Heart right ventricle (tissue), 16 donors: ENCODE measurements at regions of chr17 and their contacts with region 1.

Region 1: GRCh38 chr17:49315551-49316257 is 46.3 kb downstream of the ZNF652 start:
- DNase-seq: peak; percentile 43 to 71
- ATAC-seq: peak; percentile 93 to 99 (median 97)
- H3K4me3 ChIP-seq: no peak overlapping the region
- H3K27ac ChIP-seq: peak overlapping the region in 1 of 10 donors; percentile 59
- H3K4me1 ChIP-seq: peaks cover 0 to 28% (median 6%) of the 10 kb centered on the region in 9 donors
- H3K27me3 ChIP-seq: no peaks in the 10 kb centered on the region
- CTCF ChIP-seq: peak; percentile 57 to 93 (median 84)

Region 2: DNA sequence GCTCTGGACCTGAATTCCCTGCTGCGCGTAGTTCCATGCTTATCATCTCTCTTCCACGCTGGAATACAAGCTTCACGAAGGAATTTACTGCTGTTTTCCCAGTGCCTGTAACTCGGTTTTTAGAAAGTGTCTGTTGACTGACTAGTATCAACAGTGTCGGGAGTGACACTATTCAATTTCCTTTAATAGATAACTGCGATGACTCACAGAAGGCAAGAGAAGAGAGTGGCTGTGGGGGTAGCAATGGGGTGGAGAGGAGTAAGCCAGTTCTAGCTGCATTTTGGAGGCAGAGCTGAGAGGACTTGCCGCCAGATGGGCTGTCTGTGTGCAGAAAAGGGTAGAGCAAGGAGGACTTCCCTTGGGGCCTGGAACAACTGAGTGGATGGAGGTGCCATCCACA is 157.9 kb before region 1 on chr17:
- intact Hi-C with region 1: no loop called
- DNase-seq: no peak
- ATAC-seq: no peak
- H3K4me3 ChIP-seq: no peak overlapping the region
- H3K27ac ChIP-seq: no peak overlapping the region
- H3K4me1 ChIP-seq: no peaks in the 10 kb centered on the region
- H3K27me3 ChIP-seq: peaks cover 0 to 87% (median 70%) of the 10 kb centered on the region in 7 donors
- CTCF ChIP-seq: no peak

Region 3: DNA sequence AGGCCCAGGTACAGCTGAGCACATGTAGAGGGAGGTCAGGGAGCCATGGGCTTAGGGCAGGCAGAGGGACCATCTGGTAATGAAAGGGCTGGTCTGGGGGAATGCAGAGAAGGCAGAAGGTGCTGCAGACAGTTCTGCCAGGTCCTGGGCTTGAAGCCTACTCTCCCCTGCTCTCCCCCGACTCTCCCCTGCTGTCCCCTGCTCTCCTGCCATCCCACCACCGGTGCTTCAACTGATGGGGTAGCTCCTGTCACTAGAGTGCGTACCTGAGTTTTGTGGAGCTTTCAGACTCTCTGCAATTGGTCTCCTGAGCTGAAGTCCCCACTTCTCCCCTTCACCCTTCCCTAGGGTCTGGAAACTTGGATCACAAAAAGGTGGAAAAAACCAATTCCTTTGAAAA is 47.8 kb before region 1 on chr17:
- intact Hi-C with region 1: loop called in 1 of 10 experiments (anchors 1 kb)
- DNase-seq: no peak
- ATAC-seq: no peak
- H3K4me3 ChIP-seq: no peak overlapping the region
- H3K27ac ChIP-seq: no peak overlapping the region
- H3K4me1 ChIP-seq: no peaks in the 10 kb centered on the region
- H3K27me3 ChIP-seq: no peaks in the 10 kb centered on the region
- CTCF ChIP-seq: no peak

Region 4: GRCh38 chr17:49361902-49362722 is 46.4 kb after region 1 on chr17 and contains the start of gene ZNF652:
- intact Hi-C with region 1: loop called in 5 of 10 experiments (anchors 5 to 10 kb)
- DNase-seq: peak; percentile 91
- ATAC-seq: peak; percentile 86 to 95 (median 92)
- H3K4me3 ChIP-seq: peak within 1 kb of the TSS; percentile 82 to 100 (median 94)
- H3K27ac ChIP-seq: peak within 1 kb of the TSS; percentile 55 to 95 (median 92)
- H3K4me1 ChIP-seq: peaks cover 0 to 46% (median 36%) of the 10 kb centered on the region in 9 donors
- H3K27me3 ChIP-seq: no peaks in the 10 kb centered on the region
- CTCF ChIP-seq: no peak
- total RNA-seq, gene ZNF652: 16.0 to 23.8 (median 19.6) TPM

Region 5: DNA sequence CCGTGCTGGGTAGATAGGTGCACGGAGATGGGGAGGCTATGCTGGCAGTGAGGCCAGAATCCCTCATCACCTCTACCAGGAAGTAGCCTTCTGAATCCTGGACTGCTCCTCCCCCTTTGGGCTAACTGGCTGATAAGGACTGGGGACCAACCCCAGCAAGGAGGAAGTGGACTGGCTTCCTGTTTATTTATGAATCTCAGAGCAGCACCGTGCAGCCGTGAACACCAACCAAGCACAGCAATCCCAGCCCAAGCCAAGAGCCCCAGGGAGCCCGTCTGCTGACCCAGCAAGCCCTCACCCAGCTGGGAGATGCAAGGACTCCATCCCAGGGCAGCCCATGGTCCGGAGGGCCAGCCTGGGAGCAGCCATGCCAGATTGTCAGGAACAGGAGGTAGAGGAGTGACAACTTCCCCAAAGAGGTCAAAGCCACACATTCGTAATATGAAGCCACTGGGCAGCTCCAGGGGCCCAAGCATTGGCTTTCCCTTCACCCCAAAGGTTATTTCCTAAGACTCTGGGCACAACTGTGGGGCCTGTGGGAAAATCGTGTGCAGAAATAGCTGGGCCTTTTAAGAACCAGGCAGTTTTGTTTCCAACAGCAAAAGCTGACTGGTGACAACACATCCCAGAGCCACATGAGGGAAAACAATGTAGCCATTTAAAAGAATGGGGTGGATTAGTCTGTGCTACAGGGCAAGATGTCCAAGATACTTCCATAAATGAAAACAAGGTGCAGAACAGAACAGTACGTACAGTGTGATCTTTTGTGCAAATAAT is 75.0 kb after region 1 on chr17:
- intact Hi-C with region 1: loop called (anchors 1 to 5 kb)
- DNase-seq: no peak
- ATAC-seq: peak; percentile 39 to 76 (median 57)
- H3K4me3 ChIP-seq: peak overlapping the region in 2 of 10 donors; percentile 2 to 38
- H3K27ac ChIP-seq: peak overlapping the region in 5 of 10 donors; percentile 12 to 90 (median 58)
- H3K4me1 ChIP-seq: peaks cover 0 to 75% (median 8%) of the 10 kb centered on the region in 9 donors
- H3K27me3 ChIP-seq: no peaks in the 10 kb centered on the region
- CTCF ChIP-seq: no peak

Region 6: DNA sequence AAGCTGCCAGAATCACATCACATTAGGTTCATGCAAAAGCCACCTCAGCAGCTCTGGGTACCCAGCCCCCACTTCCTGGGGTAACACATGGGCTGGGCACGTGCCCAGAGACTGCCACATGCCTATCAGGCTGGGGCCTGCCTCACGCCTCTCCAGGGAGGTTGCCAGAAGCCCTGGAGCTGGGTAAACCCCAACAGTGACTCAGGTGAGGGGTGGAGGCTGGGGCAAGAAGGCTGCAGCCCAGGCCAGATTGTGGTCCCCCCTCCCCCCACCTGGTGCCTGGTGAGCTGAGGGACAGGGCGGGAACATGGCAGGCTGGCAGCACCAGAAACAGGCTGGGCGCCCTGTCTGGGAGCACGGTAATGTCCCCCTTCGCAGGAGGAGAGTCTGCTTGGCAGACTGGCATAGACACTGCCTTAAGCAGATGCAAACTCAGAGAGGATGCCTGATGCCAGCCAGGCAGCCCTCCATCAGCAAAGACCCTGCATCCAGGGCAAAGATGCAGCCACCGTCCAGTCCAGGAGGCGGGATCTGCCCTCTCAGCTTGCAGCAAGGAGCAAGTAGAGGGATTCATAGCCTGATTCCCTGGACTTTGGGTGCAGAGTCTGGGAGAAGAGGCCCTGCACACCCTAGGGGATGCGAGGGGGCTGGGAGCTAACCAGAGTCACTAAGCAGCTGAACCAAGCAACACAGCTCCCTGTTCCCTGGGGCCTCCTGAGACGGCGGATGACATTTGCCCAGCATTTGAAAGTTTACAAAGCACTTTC is 208.2 kb after region 1 on chr17:
- intact Hi-C with region 1: no loop called
- DNase-seq: no peak
- ATAC-seq: no peak
- H3K4me3 ChIP-seq: no peak overlapping the region
- H3K27ac ChIP-seq: no peak overlapping the region
- H3K4me1 ChIP-seq: peaks cover 0 to 31% (median 0%) of the 10 kb centered on the region in 9 donors
- H3K27me3 ChIP-seq: peaks cover 0 to 77% (median 1%) of the 10 kb centered on the region in 7 donors
- CTCF ChIP-seq: no peak

Region 7: DNA sequence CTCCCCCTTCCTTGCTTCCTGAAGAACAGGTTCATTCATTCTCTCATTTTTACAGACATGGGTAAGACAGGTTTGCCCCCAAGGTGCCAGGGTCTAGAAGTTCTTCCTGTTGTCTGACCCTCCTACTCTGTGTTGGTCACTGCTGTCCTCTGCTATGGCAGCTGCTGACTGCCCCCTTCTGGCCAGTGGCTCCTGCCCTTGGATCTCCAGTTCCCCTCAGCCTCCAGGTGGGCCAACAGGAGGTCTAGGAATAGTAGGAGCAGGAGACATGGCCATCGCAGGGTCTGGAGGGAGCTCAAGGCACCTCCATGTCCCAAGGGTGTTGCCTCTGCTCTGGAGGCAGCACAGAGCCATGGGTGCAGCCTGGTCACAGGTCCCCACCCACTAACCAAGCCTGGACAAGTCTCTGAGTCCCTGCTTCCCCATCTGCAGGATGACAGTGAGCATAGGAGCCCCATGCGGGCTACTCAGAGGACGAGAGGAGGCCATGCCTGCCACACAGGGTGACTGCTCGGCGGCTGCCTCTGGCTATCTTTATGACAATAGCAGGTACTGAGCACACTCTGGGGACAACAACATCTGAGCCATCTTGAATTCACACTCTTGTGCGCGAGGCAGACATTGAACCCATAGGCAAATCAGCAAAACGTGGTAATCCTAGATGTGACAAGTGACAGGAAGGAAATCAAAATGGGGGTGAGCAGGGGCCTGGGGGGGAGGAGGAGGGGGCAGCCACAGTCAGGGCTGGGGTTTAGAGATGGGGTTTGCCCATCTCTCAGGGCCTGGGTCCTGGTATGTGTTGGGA is 233.0 kb after region 1 on chr17:
- intact Hi-C with region 1: loop called in 6 of 10 experiments (anchors 5 to 10 kb)
- DNase-seq: peak in 1 of 2 donors; percentile 64
- ATAC-seq: peak; percentile 43 to 78 (median 70)
- H3K4me3 ChIP-seq: no peak overlapping the region
- H3K27ac ChIP-seq: peak overlapping the region in 2 of 10 donors; percentile 40 to 65
- H3K4me1 ChIP-seq: peaks cover 0 to 23% (median 0%) of the 10 kb centered on the region in 9 donors
- H3K27me3 ChIP-seq: peaks cover 0 to 18% (median 0%) of the 10 kb centered on the region in 7 donors
- CTCF ChIP-seq: peak; percentile 20 to 73 (median 63)

Region 8: DNA sequence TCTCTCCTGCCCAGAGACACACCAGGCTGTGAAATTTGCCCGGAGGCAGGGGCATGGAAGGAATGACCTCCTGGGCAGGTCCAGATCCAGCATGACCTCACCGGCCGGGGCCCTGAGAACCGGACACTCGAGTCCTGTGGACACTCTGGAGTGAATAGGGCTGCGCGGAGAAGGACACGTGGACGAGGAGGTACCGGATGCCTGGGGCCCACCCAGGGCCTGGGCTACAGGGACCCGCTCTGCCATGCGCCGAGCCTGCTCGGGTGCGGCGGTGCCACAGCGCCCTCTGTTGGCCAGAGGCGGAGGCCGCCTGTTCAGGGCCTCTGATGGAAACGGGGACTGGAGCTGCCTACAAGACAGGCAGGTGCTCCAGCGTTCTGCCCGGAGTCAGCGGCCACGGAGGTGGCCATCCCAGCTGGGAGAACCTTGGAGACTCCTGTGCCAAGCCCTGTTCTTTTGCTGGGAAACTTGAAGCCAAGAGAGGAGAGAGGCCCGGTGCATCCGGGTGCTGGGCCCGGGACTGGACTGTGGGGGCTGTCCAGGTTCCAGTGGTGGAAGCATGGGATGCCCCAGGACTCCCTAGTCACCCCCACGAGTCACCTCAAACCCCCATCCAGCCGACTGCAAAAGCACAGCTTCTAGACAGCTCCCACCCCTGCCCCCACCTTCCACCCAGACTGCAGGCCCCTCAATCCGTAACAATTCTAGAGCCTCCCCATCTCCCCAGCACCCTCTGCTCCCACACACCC is 240.7 kb after region 1 on chr17:
- intact Hi-C with region 1: loop called in 9 of 10 experiments (anchors 2 to 10 kb)
- DNase-seq: peak; percentile 64 to 82
- ATAC-seq: peak; percentile 87 to 93 (median 92)
- H3K4me3 ChIP-seq: peak overlapping the region in 1 of 10 donors; percentile 17
- H3K27ac ChIP-seq: no peak overlapping the region
- H3K4me1 ChIP-seq: peaks cover 0 to 8% (median 3%) of the 10 kb centered on the region in 9 donors
- H3K27me3 ChIP-seq: peaks cover 0 to 6% (median 0%) of the 10 kb centered on the region in 7 donors
- CTCF ChIP-seq: peak; percentile 94 to 100 (median 99)